Calu3 (cell line): ENCODE measurements at regions of chr7 and their contacts with region 1.

Region 1: DNA sequence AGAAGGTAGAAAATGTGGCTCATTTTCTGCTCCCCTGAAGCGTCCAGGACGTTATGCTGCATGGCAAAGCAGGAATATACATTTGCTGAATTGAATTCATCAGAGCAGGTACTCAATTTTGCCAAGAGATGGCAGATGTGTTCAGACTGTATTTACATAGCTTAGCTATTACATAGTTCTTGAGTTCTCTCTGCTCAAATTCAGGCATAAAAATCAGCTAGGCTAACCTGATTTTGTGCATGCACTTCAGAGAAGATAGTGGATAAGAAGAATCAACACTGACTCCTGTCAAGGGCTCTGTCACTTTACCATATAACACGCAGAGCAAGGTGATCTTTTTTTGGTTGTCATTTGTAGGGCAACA is 209.2 kb upstream of the FAM3C start:
- DNase-seq: peak; percentile 17
- H3K4me3 Mint-ChIP-seq: no peak overlapping the region
- H3K27ac Mint-ChIP-seq: peak overlapping the region; percentile 43
- H3K4me1 Mint-ChIP-seq: peaks cover 25% of the 10 kb centered on the region
- H3K27me3 Mint-ChIP-seq: no peaks in the 10 kb centered on the region
- CTCF ChIP-seq: peak; percentile 24

Region 2: DNA sequence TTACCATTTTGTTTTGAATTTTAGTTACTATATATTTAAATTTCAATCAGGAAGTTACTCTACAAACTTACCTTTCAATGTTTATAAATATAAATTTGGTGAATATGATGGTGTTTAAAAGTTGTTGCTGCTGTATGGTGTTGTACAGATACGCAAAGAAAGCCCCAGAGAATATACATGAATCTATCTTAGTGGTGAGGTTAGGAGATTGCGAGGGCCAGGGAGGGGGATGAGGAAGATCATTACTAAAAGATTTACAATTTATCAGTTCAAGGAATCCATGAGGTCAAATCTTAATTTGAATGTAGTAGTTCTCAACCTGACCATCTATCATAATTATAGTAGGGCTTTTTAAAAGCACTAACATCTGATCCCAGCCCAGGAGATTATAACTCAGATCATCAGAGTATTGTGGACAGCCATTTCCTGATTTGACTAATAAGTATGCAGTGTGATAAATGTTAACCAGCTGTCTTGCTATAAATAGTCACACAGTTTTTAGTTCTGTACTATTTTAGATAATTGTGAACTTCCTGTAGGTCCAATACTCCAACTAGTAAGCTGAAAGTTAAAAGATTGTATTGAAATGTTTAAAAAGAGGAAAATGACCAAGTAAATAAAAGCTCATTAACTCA is 232.8 kb before region 1 on chr7:
- CTCF ChIA-PET with region 1: no interaction called
- intact Hi-C with region 1: no loop called
- DNase-seq: no peak
- H3K4me3 Mint-ChIP-seq: no peak overlapping the region
- H3K27ac Mint-ChIP-seq: no peak overlapping the region
- H3K4me1 Mint-ChIP-seq: peaks cover 54% of the 10 kb centered on the region
- H3K27me3 Mint-ChIP-seq: no peaks in the 10 kb centered on the region
- CTCF ChIP-seq: no peak

Region 3: GRCh38 chr7:121519548-121520521 is 85.5 kb before region 1 on chr7:
- CTCF ChIA-PET with region 1: no interaction called
- intact Hi-C with region 1: no loop called
- DNase-seq: no peak
- H3K4me3 Mint-ChIP-seq: no peak overlapping the region
- H3K27ac Mint-ChIP-seq: no peak overlapping the region
- H3K4me1 Mint-ChIP-seq: no peaks in the 10 kb centered on the region
- H3K27me3 Mint-ChIP-seq: no peaks in the 10 kb centered on the region
- CTCF ChIP-seq: no peak

Region 4: GRCh38 chr7:121638286-121638685 is 33.0 kb after region 1 on chr7:
- CTCF ChIA-PET with region 1: no interaction called
- intact Hi-C with region 1: loop called (anchors 1 kb)
- DNase-seq: no peak
- H3K4me3 Mint-ChIP-seq: no peak overlapping the region
- H3K27ac Mint-ChIP-seq: no peak overlapping the region
- H3K4me1 Mint-ChIP-seq: no peaks in the 10 kb centered on the region
- H3K27me3 Mint-ChIP-seq: no peaks in the 10 kb centered on the region
- CTCF ChIP-seq: no peak

Region 5: DNA sequence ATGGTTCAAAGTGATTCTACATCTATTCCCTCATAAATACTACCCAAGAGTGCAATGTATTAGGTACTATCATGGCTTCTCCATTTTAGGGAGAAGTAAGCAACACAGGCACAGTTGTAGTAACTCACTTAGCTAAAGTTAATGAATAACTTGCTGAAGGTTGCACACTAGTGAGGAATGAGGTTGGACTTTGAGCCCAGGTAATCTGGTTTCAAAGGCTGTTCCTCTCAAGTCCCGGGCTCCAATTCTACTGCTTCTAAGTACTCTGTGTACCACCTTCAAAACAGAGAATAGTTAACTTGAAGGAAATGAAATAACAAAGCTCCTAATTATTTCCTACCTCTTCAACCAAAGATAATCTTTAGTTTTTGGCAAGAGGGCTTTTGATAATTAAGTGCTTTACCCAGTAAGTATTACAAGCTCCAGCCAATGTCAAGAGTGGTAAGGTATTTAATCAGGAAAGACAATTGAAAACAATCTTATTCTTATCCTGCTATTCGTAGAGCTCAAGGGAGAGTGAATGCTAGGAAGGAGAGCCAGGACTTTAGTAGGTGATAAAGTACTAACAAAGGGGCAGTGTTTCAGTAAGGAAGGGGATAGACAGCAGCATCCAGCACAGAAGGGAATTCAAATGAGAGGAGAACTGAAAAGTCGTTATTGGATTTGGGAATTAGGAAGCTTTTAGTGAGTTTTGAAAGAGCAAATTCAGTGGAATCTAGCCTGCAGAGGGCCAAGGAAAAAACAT is 109.4 kb after region 1 on chr7:
- CTCF ChIA-PET with region 1: no interaction called
- intact Hi-C with region 1: loop called (anchors 10 kb)
- DNase-seq: peak; percentile 67
- H3K4me3 Mint-ChIP-seq: peak overlapping the region; percentile 64
- H3K27ac Mint-ChIP-seq: peak overlapping the region; percentile 91
- H3K4me1 Mint-ChIP-seq: peaks cover 27% of the 10 kb centered on the region
- H3K27me3 Mint-ChIP-seq: no peaks in the 10 kb centered on the region
- CTCF ChIP-seq: no peak

Region 6: GRCh38 chr7:121744319-121744718 is 139.0 kb after region 1 on chr7:
- CTCF ChIA-PET with region 1: interaction called, 3 read pairs
- intact Hi-C with region 1: loop called (anchors 2 kb)
- DNase-seq: peak; percentile 25
- H3K4me3 Mint-ChIP-seq: peak overlapping the region; percentile 67
- H3K27ac Mint-ChIP-seq: peak overlapping the region; percentile 99
- H3K4me1 Mint-ChIP-seq: peaks cover 38% of the 10 kb centered on the region
- H3K27me3 Mint-ChIP-seq: no peaks in the 10 kb centered on the region
- CTCF ChIP-seq: no peak

Region 7: GRCh38 chr7:121872831-121873288 is 267.6 kb after region 1 on chr7 and contains the start of gene PTPRZ1:
- CTCF ChIA-PET with region 1: interaction called, 4 read pairs
- intact Hi-C with region 1: loop called (anchors 10 kb)
- DNase-seq: peak; percentile 49
- H3K4me3 Mint-ChIP-seq: peak within 1 kb of the TSS; percentile 82
- H3K27ac Mint-ChIP-seq: peak within 1 kb of the TSS; percentile 9
- H3K4me1 Mint-ChIP-seq: no peaks in the 10 kb centered on the region
- H3K27me3 Mint-ChIP-seq: peaks cover 14% of the 10 kb centered on the region
- CTCF ChIP-seq: no peak
- total RNA-seq, gene PTPRZ1: 4.9 and 5.8 TPM in 2 replicates